ENCODE measurements at regions of chr1 and their contacts with region 1.

Region 1: DNA sequence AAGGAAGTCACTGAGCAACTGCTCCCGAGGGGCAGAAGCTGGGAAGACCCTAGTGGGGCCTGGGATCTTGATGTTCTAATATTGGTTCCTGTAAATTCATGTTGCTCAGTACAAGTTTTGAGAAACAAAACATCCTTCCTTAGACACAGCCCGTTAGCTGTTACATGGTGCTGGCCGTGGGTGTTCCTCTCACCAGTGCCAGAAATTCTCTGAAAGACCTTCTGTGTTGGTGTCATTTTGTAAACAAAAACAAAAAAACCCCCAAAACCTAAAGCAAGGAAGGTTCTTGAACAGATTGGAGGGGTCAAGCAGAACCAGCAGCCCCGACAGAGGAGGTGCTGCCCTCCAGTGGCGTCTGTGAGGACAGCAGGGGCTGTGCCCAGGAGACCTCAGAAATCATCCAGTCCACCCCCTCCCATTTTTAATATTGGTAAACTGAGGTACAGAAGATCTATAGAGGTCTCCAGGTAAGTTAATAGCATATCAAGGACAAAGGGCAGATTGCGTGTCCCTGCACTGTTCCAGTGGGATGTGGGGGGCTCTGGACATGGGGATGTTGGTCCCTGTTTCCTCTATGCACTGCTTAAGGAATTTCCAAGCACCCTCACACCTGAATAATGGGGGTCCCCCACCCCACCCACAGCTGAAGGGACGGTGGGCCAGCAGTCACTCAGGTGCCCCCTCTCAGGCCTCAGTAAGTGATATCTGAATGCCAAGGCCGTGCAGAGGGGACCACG is 38.2 kb downstream of the SLC2A7 start:
- DNase-seq: no peak
- ATAC-seq: peak; percentile 72
- H3K4me3 ChIP-seq: peak overlapping the region in 1 of 3 experiments; percentile 51; a peak in 1 of 6 replicates
- H3K27ac ChIP-seq: no peak overlapping the region
- H3K4me1 ChIP-seq: peaks cover 57% of the 10 kb centered on the region
- H3K27me3 ChIP-seq: peaks cover 0 to 8% of the 10 kb centered on the region in 2 experiments; a peak in 1 of 5 replicates
- CTCF ChIP-seq: peak; percentile 83
- EP300 ChIP-seq: no peak
- POLR2A ChIP-seq: no peak
- RAD21 ChIP-seq: 0 out of 2 replicates have a peak, but pooled peaks have one; percentile 37

Region 2: DNA sequence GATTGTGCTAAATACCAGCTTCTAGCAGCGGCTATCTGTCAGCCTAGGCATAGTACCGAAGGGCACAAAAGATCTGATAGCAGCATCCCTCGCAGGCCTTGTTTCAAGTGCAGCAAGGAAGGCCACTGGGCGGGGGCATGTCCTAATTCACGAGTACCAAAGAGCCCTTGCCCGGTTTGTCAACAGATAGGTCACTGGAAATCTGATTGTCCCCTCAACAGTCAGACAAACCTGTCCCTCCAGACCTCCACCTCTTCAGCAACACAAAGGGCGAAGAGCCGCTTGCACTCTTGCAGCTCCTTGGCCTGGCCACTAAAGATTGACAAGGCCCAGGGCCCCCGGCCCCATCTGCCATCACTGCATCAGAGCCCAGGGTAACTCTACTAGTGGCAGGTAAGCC is 65.1 kb before region 1 on chr1:
- CTCF ChIA-PET with region 1: interaction called, 13 read pairs
- POLR2A ChIA-PET with region 1: no interaction called
- in situ Hi-C with region 1: loop called (anchors 5 kb)
- intact Hi-C with region 1: loop called (anchors 1 kb)
- DNase-seq: no peak
- ATAC-seq: no peak
- H3K4me3 ChIP-seq: no peak overlapping the region
- H3K27ac ChIP-seq: no peak overlapping the region
- H3K4me1 ChIP-seq: peaks cover 18% of the 10 kb centered on the region
- H3K27me3 ChIP-seq: peaks cover 3 to 60% of the 10 kb centered on the region in 2 experiments; a peak in 4 of 5 replicates
- CTCF ChIP-seq: no peak
- EP300 ChIP-seq: no peak
- POLR2A ChIP-seq: no peak
- RAD21 ChIP-seq: no peak

Region 3: GRCh38 chr1:8962812-8963530 is 25.1 kb before region 1 on chr1:
- CTCF ChIA-PET with region 1: interaction called, 6 read pairs
- POLR2A ChIA-PET with region 1: interaction called, 3 read pairs
- in situ Hi-C with region 1: no loop called
- intact Hi-C with region 1: loop called (anchors 1 kb)
- DNase-seq: peak; percentile 71
- ATAC-seq: peak; percentile 88
- H3K4me3 ChIP-seq: no peak overlapping the region
- H3K27ac ChIP-seq: no peak overlapping the region
- H3K4me1 ChIP-seq: peaks cover 22% of the 10 kb centered on the region
- H3K27me3 ChIP-seq: peaks cover 0 to 6% of the 10 kb centered on the region in 2 experiments; a peak in 3 of 5 replicates
- CTCF ChIP-seq: peak; percentile 74
- EP300 ChIP-seq: no peak
- POLR2A ChIP-seq: no peak
- RAD21 ChIP-seq: no peak

Measured in HepG2 (cell line).